Colonic mucosa (tissue), 4 donors: ENCODE measurements at regions of chr12 and their contacts with region 1.

Region 1: GRCh38 chr12:98998697-98999299 is 353.7 kb downstream of the APAF1 start:
- DNase-seq: no peak
- H3K4me3 ChIP-seq: no peak overlapping the region
- H3K27ac ChIP-seq: no peak overlapping the region
- H3K4me1 ChIP-seq: no peaks in the 10 kb centered on the region
- H3K27me3 ChIP-seq: no peaks in the 10 kb centered on the region
- CTCF ChIP-seq: peak; percentile 56

Region 2: DNA sequence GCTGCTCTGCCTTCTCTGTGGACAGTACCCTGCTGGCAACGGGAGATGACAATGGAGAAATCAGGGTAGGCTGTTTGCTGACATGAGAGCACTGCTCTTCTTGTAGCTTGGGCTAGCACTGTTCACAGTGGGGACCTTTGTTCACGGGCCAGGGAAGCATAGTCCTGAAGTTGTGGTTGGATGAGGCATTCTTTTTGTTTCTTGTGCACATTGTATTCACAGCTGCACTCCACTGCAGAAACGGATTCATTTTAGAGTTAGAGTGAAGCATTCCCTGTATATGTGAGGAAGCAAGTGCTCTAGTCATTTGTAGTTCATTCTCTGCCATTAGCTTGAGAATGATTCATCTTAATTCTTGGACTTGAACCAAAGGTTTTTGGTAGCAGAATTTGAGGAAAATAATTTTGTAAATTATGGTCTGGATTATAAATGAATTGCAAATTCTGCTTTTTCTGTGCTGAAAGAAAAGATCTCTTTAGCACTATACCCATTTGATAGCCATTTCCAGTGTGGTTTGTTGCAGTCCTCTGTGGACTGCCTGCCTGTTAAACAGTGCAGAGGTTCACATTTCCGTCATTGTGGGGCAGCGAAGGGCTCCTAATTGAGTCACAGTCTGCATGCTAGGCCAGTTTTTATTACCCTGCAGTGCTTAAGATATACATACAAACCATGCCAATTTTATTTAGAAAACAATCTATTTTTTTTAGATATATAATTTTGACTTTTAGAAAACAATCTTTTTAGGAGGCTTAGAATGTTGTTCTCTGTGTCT is 273.1 kb before region 1 on chr12:
- intact Hi-C with region 1: loop called (anchors 10 kb)
- DNase-seq: no peak
- H3K4me3 ChIP-seq: no peak overlapping the region
- H3K27ac ChIP-seq: no peak overlapping the region
- H3K4me1 ChIP-seq: no peaks in the 10 kb centered on the region
- H3K27me3 ChIP-seq: no peaks in the 10 kb centered on the region
- CTCF ChIP-seq: peak; percentile 29